Activated T-helper 1 cell treated with anti-CD3 and anti-CD28 coated beads, Interleukin-12 subunit alpha, Interleukin-12 subunit beta, Interleukin-2, Interleukin-4 antibody, amounts not matched to agents 30 ng/mL and 10 ng/mL and 1 ng/mL, durations not matched to agents 14 hours and 24 hours and 36 hours (primary cell): ENCODE measurements at regions of chr1 and their contacts with region 1.

Region 1: DNA sequence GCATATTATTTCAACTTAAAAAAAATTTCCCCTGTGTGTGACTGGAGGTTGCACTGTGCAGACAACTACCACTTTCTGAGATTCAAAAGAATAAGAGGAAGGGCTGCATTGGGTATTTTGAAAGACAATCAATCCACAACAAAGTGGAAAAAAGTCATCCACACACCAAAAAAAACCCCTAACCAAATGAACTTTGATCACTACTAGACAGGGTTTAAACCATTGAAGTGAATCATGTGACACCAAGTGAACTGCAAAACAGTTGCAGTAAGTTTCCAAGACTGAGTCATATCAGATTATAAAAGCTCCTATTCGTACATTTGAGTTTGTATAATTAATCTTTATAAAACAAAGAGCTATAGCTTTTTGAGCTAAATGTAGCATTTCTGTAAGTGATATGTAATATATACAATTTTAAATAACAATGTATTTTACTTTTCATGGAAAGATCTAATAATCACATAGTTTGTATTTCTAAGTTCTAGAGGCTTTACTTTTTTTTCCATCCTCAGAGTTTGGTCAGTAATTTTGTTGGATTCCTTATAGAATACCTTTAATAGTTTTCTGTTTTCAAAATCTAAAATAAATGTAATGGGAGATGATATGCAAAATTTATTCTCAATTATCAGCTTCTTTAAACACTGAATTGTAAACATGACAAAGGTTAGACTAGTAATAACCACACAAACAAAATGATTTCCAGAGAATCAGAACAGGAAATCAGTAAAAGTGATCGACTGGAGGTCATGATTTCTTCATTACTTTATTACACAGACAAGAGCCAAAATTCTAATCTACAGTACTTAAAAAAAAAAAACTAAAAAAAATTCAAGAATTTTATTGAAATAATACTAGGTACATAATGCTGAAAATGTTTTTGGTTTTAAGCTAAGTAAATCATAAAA is 50.5 kb upstream of the GFI1 start:
- DNase-seq: peak; percentile 51
- H3K4me3 Mint-ChIP-seq: peak overlapping the region; percentile 60
- H3K27ac Mint-ChIP-seq: peak overlapping the region; percentile 92
- H3K4me1 Mint-ChIP-seq: peaks cover 86% of the 10 kb centered on the region
- H3K27me3 Mint-ChIP-seq: no peaks in the 10 kb centered on the region

Region 2: GRCh38 chr1:91803847-91804545 is 733.2 kb before region 1 on chr1:
- intact Hi-C with region 1: loop called (anchors 1 kb)
- DNase-seq: peak; percentile 70
- H3K4me3 Mint-ChIP-seq: peak overlapping the region; percentile 72
- H3K27ac Mint-ChIP-seq: peak overlapping the region; percentile 93
- H3K4me1 Mint-ChIP-seq: peaks cover 68% of the 10 kb centered on the region
- H3K27me3 Mint-ChIP-seq: peaks cover 6% of the 10 kb centered on the region

Region 3: DNA sequence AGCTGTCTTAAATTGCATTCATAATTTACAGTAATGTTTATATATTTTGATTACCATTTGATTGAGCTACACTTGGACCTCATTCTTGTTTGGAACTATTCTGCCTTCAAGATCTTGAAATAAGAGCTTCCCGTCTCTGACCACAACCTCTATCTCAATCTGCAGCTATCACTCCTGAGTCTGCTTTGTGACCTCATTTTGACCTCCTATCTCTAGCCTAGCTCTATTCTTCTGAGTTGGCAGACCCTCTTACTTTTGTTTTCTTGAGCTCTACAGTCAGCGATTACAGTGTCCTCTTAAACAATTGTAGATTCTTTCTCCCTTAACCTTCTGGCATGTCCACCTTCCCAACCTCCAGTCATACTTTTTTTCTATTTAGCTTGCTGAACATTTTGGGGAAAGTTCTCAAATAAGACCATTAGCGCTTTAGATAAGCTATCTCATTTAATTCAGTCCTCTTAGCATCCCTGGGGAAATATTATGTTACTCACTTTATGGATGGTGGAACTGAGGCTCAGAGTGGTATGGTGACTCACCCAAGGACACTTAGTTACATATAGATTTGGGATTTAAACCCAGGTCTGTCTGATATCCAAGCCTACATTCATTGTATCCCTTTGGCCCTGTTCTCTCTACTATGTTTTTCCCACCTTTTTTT is 219.3 kb before region 1 on chr1:
- intact Hi-C with region 1: loop called (anchors 1 kb)
- DNase-seq: no peak
- H3K4me3 Mint-ChIP-seq: peak overlapping the region; percentile 66
- H3K27ac Mint-ChIP-seq: peak overlapping the region; percentile 91
- H3K4me1 Mint-ChIP-seq: peaks cover 68% of the 10 kb centered on the region
- H3K27me3 Mint-ChIP-seq: no peaks in the 10 kb centered on the region

Region 4: DNA sequence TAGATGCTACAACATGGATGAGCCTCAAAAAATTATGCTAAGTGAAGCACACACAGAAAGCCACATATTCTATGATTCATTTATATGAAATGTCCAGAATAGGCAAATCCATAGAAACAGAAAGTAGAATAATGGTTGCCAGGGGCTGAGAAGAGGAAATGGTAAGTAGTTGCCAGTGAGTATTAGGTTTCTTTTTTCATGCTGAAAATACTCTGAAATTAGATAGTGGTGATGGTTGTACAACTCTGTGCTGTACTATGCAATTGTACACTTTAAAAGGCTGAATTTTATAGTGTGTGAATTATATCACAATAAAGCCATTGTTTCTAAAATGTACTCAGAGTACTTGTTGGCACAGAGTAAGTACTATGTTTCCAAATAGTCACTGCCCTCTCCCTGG is 35.0 kb before region 1 on chr1:
- intact Hi-C with region 1: loop called (anchors 2 kb)
- DNase-seq: no peak
- H3K4me3 Mint-ChIP-seq: no peak overlapping the region
- H3K27ac Mint-ChIP-seq: no peak overlapping the region
- H3K4me1 Mint-ChIP-seq: peaks cover 50% of the 10 kb centered on the region
- H3K27me3 Mint-ChIP-seq: no peaks in the 10 kb centered on the region

Region 5: GRCh38 chr1:92583821-92584760 is 46.9 kb after region 1 on chr1:
- intact Hi-C with region 1: loop called (anchors 1 kb)
- DNase-seq: no peak
- H3K4me3 Mint-ChIP-seq: peak overlapping the region; percentile 62
- H3K27ac Mint-ChIP-seq: peak overlapping the region; percentile 91
- H3K4me1 Mint-ChIP-seq: peaks cover 75% of the 10 kb centered on the region
- H3K27me3 Mint-ChIP-seq: no peaks in the 10 kb centered on the region